Ovary (tissue), 10 donors: ENCODE measurements at regions of chr14 and their contacts with region 1.

Region 1: DNA sequence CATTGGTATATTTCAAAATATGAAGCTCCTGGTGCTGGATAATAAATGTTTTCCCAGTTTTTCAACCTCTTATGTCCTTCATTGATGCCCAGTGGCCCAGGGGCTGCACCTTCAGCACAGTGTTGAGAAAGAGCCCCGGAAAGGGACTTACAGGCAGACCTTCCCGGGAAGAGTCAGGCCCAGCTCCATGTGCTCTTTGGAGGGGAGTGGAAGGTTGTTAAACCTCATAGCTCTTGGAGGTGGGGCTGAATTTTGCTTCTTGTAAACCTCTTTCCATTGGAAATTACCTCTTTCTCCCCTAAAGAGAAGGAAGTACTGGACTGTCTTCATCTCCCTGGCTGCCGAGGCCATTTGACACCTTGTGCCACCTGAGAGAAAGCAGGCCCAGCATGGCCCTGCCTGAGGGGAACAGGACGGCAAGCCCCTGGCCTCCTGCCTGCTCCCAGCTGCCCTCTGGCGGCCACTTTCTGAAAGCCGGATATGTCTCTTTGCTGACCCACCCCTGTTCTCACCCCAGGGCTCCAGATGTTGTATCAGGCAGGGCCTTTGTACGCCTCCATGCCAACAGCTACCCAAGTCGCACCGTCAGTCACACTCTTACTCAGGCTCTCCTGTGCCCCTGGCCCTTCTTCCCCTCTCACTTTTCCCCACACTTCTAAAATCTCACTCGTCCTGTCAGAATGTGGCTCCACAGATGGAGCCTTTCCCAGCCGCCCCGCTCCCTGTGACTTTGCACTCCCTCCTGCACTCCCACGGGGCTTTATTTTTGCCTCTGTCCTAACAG is 43.0 kb downstream of the EVL start:
- DNase-seq: peak; percentile 73 to 90 (median 87)
- H3K4me3 ChIP-seq: no peak overlapping the region
- H3K27ac ChIP-seq: no peak overlapping the region
- H3K4me1 ChIP-seq: peaks cover 30% of the 10 kb centered on the region
- H3K27me3 ChIP-seq: no peaks in the 10 kb centered on the region
- CTCF ChIP-seq: peak; percentile 74 to 85 (median 77)
- EP300 ChIP-seq: no peak
- POLR2A ChIP-seq: no peak

Region 2: DNA sequence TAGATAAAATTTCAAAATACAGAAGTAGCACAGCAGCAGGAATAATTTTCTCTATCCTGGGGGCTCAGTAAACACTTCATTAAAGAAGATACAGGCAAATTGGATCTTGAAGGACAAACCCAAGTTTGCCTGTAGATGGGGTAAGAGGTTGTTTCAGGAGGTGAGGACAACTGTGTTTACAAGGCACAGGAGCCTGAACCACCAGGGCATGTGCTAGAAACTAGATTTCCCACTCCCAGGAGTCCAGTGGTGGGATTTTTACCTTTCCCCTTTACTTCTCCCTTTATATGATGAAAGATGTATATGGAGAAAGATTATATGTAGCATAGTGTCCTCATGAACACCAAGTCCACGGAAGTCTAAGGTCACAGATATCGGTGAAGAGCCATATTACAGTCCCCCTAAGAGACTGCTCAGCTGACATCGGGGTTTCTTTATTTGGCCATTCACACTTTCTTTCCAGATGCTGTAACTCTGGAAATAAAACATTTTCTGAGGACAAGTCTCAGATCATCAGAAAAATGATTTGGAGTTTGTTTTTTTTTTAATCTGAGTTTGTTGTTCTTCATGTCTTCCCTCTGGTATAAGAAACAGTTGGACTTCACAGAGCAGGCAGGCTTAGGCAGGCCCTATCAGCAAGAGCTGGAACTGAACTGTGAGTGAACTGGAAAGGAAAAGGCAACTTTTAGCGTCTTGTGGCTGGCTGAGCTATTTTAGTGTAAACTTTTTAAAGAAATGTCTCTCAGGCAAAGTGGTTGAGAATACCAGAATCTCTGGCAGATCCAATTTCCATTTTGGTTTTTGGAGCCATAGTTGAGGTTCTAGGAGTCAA is 51.1 kb before region 1 on chr14:
- intact Hi-C with region 1: loop called in 2 of 4 experiments (anchors 5 to 10 kb)
- DNase-seq: no peak
- H3K4me3 ChIP-seq: no peak overlapping the region
- H3K27ac ChIP-seq: no peak overlapping the region
- H3K4me1 ChIP-seq: peaks cover 2% of the 10 kb centered on the region
- H3K27me3 ChIP-seq: no peaks in the 10 kb centered on the region
- CTCF ChIP-seq: peak in 2 of 3 donors; percentile 11 to 14
- EP300 ChIP-seq: no peak
- POLR2A ChIP-seq: no peak

Region 3: DNA sequence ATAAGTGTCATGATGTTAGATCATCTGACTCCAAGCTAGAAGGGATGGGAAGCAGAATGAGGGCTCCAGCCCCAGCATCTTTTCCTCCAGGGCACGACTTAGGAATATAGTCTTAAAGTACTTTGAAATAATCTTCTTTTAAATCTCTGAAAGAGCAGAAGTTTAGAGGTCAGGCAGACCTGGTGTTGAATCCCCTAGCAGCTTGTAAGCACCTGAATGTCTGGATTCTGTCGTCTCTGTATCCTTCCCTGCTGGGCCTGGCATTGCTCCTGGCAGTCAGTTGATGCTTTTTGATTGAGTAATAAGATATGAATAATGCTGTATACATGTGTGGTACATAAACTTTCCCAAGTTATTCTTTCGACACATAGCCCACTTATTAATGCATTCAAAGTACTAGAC is 11.7 kb before region 1 on chr14:
- intact Hi-C with region 1: no loop called
- DNase-seq: no peak
- H3K4me3 ChIP-seq: no peak overlapping the region
- H3K27ac ChIP-seq: no peak overlapping the region
- H3K4me1 ChIP-seq: peaks cover 2% of the 10 kb centered on the region
- H3K27me3 ChIP-seq: no peaks in the 10 kb centered on the region
- CTCF ChIP-seq: no peak
- EP300 ChIP-seq: no peak
- POLR2A ChIP-seq: no peak